GM12878 (cell line): ENCODE measurements at regions of chr6 and their contacts with region 1.

Region 1: DNA sequence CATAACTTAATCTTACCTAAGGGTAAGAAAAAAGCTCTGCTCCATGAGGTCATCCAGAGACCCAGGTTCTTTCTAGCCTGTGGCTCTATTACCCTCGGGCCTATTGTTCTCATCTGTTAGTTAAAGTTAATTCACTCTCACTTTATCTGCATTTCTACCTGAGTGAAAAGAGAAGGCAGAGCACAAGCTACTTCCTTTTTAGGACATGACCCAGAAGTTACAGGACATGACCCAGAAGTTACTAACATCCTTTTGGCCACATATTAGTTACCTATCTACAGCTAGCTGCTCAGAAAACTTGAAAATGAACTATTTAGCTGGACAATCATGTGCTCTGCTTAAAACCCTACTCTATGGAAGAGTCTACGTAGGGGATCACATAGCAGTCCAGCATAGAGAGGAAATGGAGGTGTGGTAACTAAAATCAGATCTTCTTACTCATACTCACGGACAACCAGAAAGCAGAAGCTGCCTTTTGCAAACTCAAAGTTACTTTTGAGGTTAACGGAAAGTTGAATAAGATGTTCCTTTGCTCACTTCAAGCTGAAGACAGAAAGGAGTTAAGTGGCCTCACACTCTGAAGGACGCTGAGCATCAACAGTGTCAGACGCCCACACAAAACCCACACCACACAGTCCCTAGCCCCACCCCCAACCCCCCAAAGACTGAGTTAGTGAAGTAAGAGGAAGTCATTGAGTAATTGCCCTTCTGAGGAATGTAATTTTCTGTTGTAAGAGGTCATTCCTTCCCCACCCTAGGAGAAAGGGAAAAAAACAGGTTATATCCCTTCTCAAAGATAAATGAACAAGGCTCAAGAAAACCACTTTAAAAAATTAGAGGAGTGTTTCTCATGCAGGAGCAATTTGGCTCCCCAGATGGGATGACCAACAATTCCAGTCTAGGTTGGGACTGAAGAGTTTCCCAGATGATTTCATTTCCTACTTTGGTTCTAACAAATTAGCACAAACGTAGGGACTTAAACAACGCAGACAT is 45.9 kb upstream of the TAB2 start:
- DNase-seq: peak; percentile 65
- ATAC-seq: peak; percentile 84
- H3K4me3 ChIP-seq: no peak overlapping the region
- H3K27ac ChIP-seq: peak overlapping the region; percentile 90
- H3K4me1 ChIP-seq: peaks cover 35% of the 10 kb centered on the region
- H3K27me3 ChIP-seq: no peaks in the 10 kb centered on the region
- CTCF ChIP-seq: no peak
- EP300 ChIP-seq: 0 out of 4 replicates have a peak, but pooled peaks of 1 of the 2 experiments have one; percentile 25
- POLR2A ChIP-seq: no peak
- RAD21 ChIP-seq: no peak

Region 2: DNA sequence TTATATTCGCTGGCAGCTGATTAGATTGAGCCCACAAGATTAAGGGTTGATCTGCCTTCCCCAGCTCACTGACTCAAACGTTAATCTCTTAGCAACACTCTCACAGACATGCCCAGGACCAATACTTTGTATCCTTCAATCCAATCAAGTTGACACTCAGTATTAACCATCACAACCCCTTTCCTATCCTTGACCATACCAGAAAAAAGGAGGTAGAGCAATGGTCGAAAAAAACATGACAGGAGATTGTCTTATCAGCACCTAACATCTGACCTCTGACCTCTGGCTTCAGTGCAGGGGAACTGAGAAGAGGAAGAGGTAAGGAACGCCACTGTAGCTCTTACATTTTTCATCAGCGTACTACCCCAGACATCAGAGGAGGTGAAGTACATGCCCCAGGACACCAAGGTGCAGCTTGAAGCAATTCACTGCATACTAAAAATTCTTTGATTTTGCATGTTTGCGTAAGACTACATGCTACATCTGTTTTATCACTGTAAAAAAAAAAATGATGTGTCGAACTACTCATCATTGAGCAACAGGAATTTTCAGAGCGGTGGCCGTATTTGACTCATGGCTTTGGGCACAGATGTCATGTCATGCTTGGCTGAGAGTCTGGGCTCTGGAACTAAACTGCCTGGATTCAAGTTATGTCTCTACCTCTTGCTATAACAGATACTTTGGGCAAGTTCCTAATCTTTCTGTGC is 142.1 kb before region 1 on chr6:
- CTCF ChIA-PET with region 1: no interaction called
- POLR2A ChIA-PET with region 1: no interaction called
- RAD21 ChIA-PET with region 1: no interaction called
- SMC1A ChIA-PET with region 1: no interaction called
- in situ Hi-C with region 1: no loop called
- intact Hi-C with region 1: no loop called
- DNase-seq: no peak
- ATAC-seq: peak; percentile 94
- H3K4me3 ChIP-seq: no peak overlapping the region
- H3K27ac ChIP-seq: no peak overlapping the region
- H3K4me1 ChIP-seq: peaks cover 15% of the 10 kb centered on the region
- H3K27me3 ChIP-seq: no peaks in the 10 kb centered on the region
- CTCF ChIP-seq: no peak
- EP300 ChIP-seq: peak in 1 of 2 experiments; percentile 37; a peak in 1 of 4 replicates
- POLR2A ChIP-seq: no peak
- RAD21 ChIP-seq: no peak

Region 3: DNA sequence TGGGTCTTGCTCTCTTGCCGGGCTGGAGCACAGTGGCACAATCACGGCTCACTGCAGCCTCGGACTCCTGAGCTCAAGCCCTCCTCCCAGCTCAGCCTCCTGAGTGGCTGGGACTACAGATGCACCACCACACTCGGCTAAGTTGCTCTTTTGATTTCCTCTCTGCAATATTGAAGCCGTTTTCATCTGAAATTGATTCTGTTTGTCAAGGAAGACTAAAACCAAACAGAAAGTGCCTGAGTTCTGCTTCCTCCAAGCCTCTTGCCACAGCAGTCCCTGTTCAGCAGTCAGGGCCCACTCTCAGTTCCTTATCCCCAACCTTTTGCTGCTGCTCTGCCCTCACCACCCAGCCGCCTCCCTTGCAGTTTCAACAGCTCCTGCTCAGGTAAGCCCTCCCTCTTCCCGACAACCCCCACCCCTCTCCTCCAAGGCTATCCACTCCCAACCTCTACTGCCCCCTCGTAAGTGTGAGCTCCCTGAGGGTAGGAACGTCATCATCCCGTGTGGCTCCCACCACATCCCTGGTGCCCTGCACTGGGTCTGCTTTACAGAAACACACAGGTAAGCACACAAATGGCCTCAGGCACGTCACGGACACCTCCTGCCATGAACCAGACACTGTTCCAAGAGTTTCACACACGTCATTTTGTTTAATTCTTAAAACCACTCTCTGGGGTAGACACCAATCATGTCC is 24.8 kb before region 1 on chr6:
- CTCF ChIA-PET with region 1: interaction called, 7 read pairs
- POLR2A ChIA-PET with region 1: interaction called, 3 read pairs
- RAD21 ChIA-PET with region 1: interaction called, 4 read pairs
- SMC1A ChIA-PET with region 1: interaction called, 10 read pairs
- in situ Hi-C with region 1: no loop called
- intact Hi-C with region 1: no loop called
- DNase-seq: peak; percentile 66
- ATAC-seq: peak; percentile 97
- H3K4me3 ChIP-seq: peak overlapping the region; percentile 46
- H3K27ac ChIP-seq: peak overlapping the region; percentile 35; the same call in 1 of the 2 replicates
- H3K4me1 ChIP-seq: peaks cover 18% of the 10 kb centered on the region
- H3K27me3 ChIP-seq: no peaks in the 10 kb centered on the region
- CTCF ChIP-seq: no peak
- EP300 ChIP-seq: peak; percentile 36 to 61; a peak in 1 of 4 replicates
- POLR2A ChIP-seq: no peak
- RAD21 ChIP-seq: no peak

Region 4: DNA sequence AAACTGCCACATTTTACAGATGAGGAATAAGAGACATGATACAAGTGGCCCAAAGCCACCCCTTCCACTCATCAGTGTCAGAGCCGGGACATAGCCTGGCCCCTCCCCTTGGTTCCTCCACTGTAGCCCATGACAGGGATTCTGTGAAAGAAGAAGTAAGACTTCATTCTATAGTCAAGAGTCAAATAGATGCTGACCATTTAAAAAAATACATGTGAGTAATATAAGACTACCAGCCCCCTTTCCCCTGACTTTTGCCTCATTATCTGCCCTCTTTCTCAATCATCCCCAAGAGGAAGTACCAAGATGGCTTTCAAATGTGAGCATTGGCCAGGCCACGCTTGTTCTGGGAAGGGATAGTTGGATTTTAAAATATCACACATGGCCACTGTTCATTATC is 11.9 kb before region 1 on chr6:
- CTCF ChIA-PET with region 1: interaction called, 12 read pairs
- POLR2A ChIA-PET with region 1: interaction called, 7 read pairs
- RAD21 ChIA-PET with region 1: no interaction called
- SMC1A ChIA-PET with region 1: interaction called, 12 read pairs
- in situ Hi-C with region 1: no loop called
- intact Hi-C with region 1: no loop called
- DNase-seq: no peak
- ATAC-seq: no peak; the same call in 2 of the 3 replicates
- H3K4me3 ChIP-seq: no peak overlapping the region
- H3K27ac ChIP-seq: no peak overlapping the region
- H3K4me1 ChIP-seq: peaks cover 3% of the 10 kb centered on the region; the same call in 1 of the 2 replicates
- H3K27me3 ChIP-seq: no peaks in the 10 kb centered on the region
- CTCF ChIP-seq: no peak
- EP300 ChIP-seq: no peak
- POLR2A ChIP-seq: no peak
- RAD21 ChIP-seq: no peak

Region 5: GRCh38 chr6:149284904-149285303 is 13.3 kb after region 1 on chr6:
- CTCF ChIA-PET with region 1: interaction called, 3 read pairs
- POLR2A ChIA-PET with region 1: interaction called, 3 read pairs
- RAD21 ChIA-PET with region 1: no interaction called
- SMC1A ChIA-PET with region 1: interaction called, 20 read pairs
- in situ Hi-C with region 1: no loop called
- intact Hi-C with region 1: no loop called
- DNase-seq: no peak
- ATAC-seq: peak; percentile 82
- H3K4me3 ChIP-seq: no peak overlapping the region
- H3K27ac ChIP-seq: no peak overlapping the region
- H3K4me1 ChIP-seq: no peaks in the 10 kb centered on the region
- H3K27me3 ChIP-seq: no peaks in the 10 kb centered on the region
- CTCF ChIP-seq: no peak
- EP300 ChIP-seq: no peak
- POLR2A ChIP-seq: no peak
- RAD21 ChIP-seq: no peak

Region 6: DNA sequence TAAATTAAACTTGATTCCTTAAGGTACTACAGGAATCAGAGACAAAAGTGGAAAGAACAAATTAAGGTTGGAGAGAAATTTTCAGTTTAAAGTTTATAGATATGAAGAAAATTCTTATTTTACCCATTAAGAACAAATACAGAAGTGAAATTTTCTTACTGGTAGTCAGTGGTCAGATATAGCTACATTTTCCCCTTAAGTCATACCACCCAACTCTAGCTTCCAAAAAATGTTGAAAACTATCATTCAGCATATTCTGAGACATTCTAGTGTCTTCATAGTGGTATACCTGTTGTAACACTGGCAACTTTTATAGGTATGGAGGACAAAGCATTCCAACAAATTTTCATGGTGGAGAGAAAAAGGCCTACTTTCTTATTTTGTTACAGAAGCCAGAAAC is 112.8 kb after region 1 on chr6:
- CTCF ChIA-PET with region 1: no interaction called
- POLR2A ChIA-PET with region 1: no interaction called
- RAD21 ChIA-PET with region 1: interaction called, 4 read pairs
- SMC1A ChIA-PET with region 1: interaction called, 10 read pairs
- in situ Hi-C with region 1: no loop called
- intact Hi-C with region 1: no loop called
- DNase-seq: no peak
- ATAC-seq: peak; percentile 78
- H3K4me3 ChIP-seq: no peak overlapping the region
- H3K27ac ChIP-seq: no peak overlapping the region
- H3K4me1 ChIP-seq: no peaks in the 10 kb centered on the region; the same call in 1 of the 2 replicates
- H3K27me3 ChIP-seq: no peaks in the 10 kb centered on the region
- CTCF ChIP-seq: no peak
- EP300 ChIP-seq: no peak
- POLR2A ChIP-seq: no peak
- RAD21 ChIP-seq: no peak

Region 7: GRCh38 chr6:149403534-149403933 is 131.9 kb after region 1 on chr6:
- CTCF ChIA-PET with region 1: no interaction called
- POLR2A ChIA-PET with region 1: no interaction called
- RAD21 ChIA-PET with region 1: no interaction called
- SMC1A ChIA-PET with region 1: no interaction called
- in situ Hi-C with region 1: no loop called
- intact Hi-C with region 1: no loop called
- DNase-seq: no peak
- ATAC-seq: no peak
- H3K4me3 ChIP-seq: no peak overlapping the region
- H3K27ac ChIP-seq: no peak overlapping the region
- H3K4me1 ChIP-seq: no peaks in the 10 kb centered on the region
- H3K27me3 ChIP-seq: no peaks in the 10 kb centered on the region
- CTCF ChIP-seq: no peak
- EP300 ChIP-seq: no peak
- POLR2A ChIP-seq: no peak
- RAD21 ChIP-seq: no peak

Region 8: GRCh38 chr6:150142670-150143515 is 871.2 kb after region 1 on chr6 and contains the start of gene PPP1R14C:
- CTCF ChIA-PET with region 1: no interaction called
- POLR2A ChIA-PET with region 1: no interaction called
- RAD21 ChIA-PET with region 1: no interaction called
- SMC1A ChIA-PET with region 1: no interaction called
- in situ Hi-C with region 1: no loop called
- intact Hi-C with region 1: no loop called
- DNase-seq: no peak
- ATAC-seq: peak; percentile 50
- H3K4me3 ChIP-seq: no peak within 1 kb of the TSS
- H3K27ac ChIP-seq: no peak within 1 kb of the TSS
- H3K4me1 ChIP-seq: peaks cover 3% of the 10 kb centered on the region; the same call in 1 of the 2 replicates
- H3K27me3 ChIP-seq: peaks cover 3 to 20% of the 10 kb centered on the region in 2 experiments
- CTCF ChIP-seq: no peak
- EP300 ChIP-seq: no peak
- POLR2A ChIP-seq: no peak
- RAD21 ChIP-seq: no peak
- polyA plus RNA-seq, gene PPP1R14C: 0.09 to 0.16 TPM